ENCODE measurements at regions of chr1 and their contacts with region 1.

Region 1: DNA sequence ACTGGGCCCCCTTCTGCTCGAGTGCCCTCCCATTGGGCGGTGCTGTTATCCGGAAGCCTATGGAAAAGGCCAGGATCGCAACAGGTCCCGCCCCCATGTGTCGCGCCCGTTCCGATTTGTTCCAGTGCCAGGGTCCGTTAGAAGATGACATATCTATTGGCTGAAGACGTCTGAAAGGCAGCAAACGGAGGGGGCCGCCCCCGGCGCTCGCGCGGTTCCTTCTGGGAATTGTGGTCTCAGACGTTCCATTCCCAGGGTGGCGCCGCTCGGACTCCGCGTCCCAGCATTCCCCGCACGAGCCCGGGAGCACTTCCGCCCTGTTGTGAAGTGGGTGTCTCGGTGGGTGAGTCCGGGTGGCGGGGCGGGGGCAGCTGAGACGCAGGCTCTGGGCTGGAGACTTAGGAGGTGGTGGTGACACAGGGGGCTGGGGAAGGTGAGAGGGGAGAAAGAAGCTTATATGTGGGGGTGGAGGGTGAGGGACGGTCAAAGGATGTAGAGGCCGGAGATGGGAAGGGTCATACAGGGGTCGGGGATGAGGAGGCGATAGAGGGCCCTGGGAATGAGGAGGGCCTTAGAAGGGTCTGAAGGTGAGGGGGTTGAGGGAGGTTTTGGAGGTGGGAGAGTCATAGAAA is at the start of gene ZSCAN20:
- DNase-seq: peak; percentile 80 to 95
- ATAC-seq: peak; percentile 96 to 98
- H3K4me3 ChIP-seq: peak within 1 kb of the TSS; percentile 91
- H3K27ac ChIP-seq: peak within 1 kb of the TSS; percentile 78 to 87
- H3K4me1 ChIP-seq: peaks cover 9% of the 10 kb centered on the region
- CTCF ChIP-seq: no peak
- EP300 ChIP-seq: no peak
- POLR2A ChIP-seq: peak; percentile 53
- RAD21 ChIP-seq: no peak
- polyA plus RNA-seq, gene ZSCAN20: 1.9 and 2.1 TPM in 2 replicates

Region 2: GRCh38 chr1:33219881-33220661 is 252.4 kb before region 1 on chr1:
- CTCF ChIA-PET with region 1: interaction called, 11 read pairs
- POLR2A ChIA-PET with region 1: no interaction called
- DNase-seq: peak in 1 of 2 experiments; percentile 18
- ATAC-seq: peak; percentile 41 to 53; a peak in 3 of 6 replicates
- H3K4me3 ChIP-seq: no peak overlapping the region
- H3K27ac ChIP-seq: no peak overlapping the region
- H3K4me1 ChIP-seq: no peaks in the 10 kb centered on the region
- CTCF ChIP-seq: no peak
- EP300 ChIP-seq: no peak
- POLR2A ChIP-seq: no peak
- RAD21 ChIP-seq: no peak

Region 3: GRCh38 chr1:33378976-33379375 is 93.5 kb before region 1 on chr1:
- CTCF ChIA-PET with region 1: no interaction called
- POLR2A ChIA-PET with region 1: no interaction called
- DNase-seq: no peak
- ATAC-seq: peak; percentile 56 to 59; a peak in 4 of 6 replicates
- H3K4me3 ChIP-seq: no peak overlapping the region
- H3K27ac ChIP-seq: no peak overlapping the region
- H3K4me1 ChIP-seq: no peaks in the 10 kb centered on the region
- CTCF ChIP-seq: no peak
- EP300 ChIP-seq: no peak
- POLR2A ChIP-seq: no peak
- RAD21 ChIP-seq: no peak

Region 4: GRCh38 chr1:33455539-33456501 is 16.6 kb before region 1 on chr1:
- CTCF ChIA-PET with region 1: interaction called, 37 read pairs
- POLR2A ChIA-PET with region 1: no interaction called
- DNase-seq: peak; percentile 49 to 69
- ATAC-seq: peak; percentile 94 to 97
- H3K4me3 ChIP-seq: no peak overlapping the region
- H3K27ac ChIP-seq: no peak overlapping the region
- H3K4me1 ChIP-seq: no peaks in the 10 kb centered on the region
- CTCF ChIP-seq: peak; percentile 55
- EP300 ChIP-seq: no peak
- POLR2A ChIP-seq: no peak
- RAD21 ChIP-seq: peak; percentile 65 to 75

Region 5: DNA sequence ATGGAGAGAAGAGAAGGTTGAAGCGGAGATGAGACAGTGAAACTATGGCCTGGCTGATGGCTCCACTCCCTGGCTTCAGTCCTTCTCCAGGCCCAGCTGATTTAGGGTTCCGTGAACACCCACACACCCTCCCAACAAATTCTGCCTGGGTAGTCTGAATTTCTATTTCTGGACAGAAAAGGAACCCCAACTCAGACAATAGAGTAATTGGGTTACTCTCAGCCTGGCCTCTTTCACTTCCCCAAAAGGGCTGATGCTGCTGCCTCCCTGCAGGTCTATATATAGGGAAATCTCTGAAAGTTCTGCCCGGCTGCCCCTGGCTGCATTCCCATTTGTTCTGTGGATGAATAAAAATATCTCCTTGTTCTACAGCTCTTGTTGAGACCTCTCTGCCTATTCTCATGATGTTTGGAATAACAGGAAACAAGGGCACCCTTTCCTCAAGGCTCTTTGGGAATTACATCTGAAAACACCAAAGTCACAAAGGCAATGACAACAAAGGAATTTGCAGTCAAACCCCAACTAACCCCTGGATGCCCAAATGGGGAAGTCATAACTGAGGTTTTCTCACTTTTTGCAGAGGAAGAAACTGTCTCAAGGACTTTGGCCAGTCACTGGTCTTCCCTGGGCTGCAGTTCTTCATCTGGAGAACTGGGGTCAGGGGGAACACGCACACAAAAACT is 11.4 kb before region 1 on chr1:
- CTCF ChIA-PET with region 1: interaction called, 37 read pairs
- POLR2A ChIA-PET with region 1: no interaction called
- DNase-seq: no peak
- ATAC-seq: no peak
- H3K4me3 ChIP-seq: no peak overlapping the region
- H3K27ac ChIP-seq: no peak overlapping the region
- H3K4me1 ChIP-seq: no peaks in the 10 kb centered on the region
- CTCF ChIP-seq: no peak
- EP300 ChIP-seq: no peak
- POLR2A ChIP-seq: no peak
- RAD21 ChIP-seq: no peak

Region 6: GRCh38 chr1:33692206-33693188 is 220.0 kb after region 1 on chr1:
- CTCF ChIA-PET with region 1: no interaction called
- POLR2A ChIA-PET with region 1: no interaction called
- DNase-seq: no peak
- ATAC-seq: no peak
- H3K4me3 ChIP-seq: no peak overlapping the region
- H3K27ac ChIP-seq: no peak overlapping the region
- H3K4me1 ChIP-seq: no peaks in the 10 kb centered on the region
- CTCF ChIP-seq: no peak
- EP300 ChIP-seq: no peak
- POLR2A ChIP-seq: no peak
- RAD21 ChIP-seq: no peak